ENCODE measurements at regions of chr14 and their contacts with region 1.

Region 1: DNA sequence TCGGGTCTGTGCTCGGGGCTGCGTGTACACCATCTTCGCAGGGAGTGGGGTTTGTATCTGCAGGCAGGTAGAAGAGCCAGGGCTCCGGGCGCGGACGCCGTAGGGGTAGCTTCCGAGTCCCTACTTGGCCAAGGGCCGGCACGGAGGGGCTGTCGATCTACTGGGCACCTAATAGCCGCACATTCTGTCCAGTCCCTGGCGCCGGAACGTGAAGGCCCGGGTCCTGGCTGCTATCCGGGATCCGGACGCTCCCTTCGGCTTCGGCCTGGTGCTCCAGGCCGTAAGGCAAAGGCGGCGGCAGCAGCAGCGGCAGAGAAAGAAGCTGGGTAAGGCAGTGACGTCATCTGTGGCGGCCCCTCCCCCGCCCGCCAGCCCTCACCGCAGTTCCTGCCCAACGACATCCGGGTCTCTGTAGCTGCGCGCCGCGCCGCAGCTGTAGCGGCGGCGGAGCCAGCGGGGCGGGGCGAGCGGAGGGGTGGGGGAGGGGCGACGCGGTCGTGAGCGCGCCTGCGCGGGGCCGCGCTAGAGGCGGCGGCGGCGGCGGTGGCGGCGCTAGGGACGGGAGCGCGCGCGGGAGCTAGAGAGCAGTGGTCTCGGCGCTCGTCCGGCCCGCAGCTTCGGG is at the start of gene PPM1A:
- DNase-seq: peak; percentile 93 to 97 (median 94)
- H3K4me3 ChIP-seq: peak within 1 kb of the TSS; percentile 78
- H3K4me3 Mint-ChIP-seq: peak within 1 kb of the TSS; percentile 90 to 99 (median 95)
- H3K27ac ChIP-seq: peak within 1 kb of the TSS; percentile 94
- H3K27ac Mint-ChIP-seq: peak within 1 kb of the TSS; percentile 97 to 100 (median 100)
- H3K4me1 ChIP-seq: peaks cover 24% of the 10 kb centered on the region
- H3K4me1 Mint-ChIP-seq: peaks cover 50 to 52% (median 52%) of the 10 kb centered on the region in 3 donors
- H3K27me3 ChIP-seq: no peaks in the 10 kb centered on the region
- H3K27me3 Mint-ChIP-seq: peaks cover 0 to 4% of the 10 kb centered on the region in 2 donors
- total RNA-seq, gene PPM1A: 54.6 to 55.3 TPM

Region 2: DNA sequence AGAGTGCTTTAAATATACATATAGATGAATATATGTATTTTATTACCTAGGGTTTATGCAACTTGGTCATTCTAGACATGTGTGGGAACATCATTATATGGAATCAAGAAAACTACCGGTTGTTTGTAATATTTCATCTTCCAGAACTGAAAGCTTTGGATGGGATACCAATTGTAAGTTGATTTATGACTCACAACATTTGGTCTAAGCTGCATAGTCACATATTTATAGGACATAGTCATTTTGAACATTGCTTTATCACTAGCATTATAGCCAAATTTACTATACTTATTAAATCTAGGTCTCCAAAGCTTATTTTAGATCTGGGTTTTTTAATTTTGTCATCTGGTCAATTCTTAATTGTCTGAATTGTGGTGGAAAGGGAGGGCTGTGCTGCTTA is 240.8 kb before region 1 on chr14:
- CTCF ChIA-PET with region 1: no interaction called
- POLR2A ChIA-PET with region 1: no interaction called
- DNase-seq: no peak
- H3K4me3 ChIP-seq: no peak overlapping the region
- H3K4me3 Mint-ChIP-seq: no peak overlapping the region
- H3K27ac ChIP-seq: no peak overlapping the region
- H3K27ac Mint-ChIP-seq: no peak overlapping the region
- H3K4me1 ChIP-seq: no peaks in the 10 kb centered on the region
- H3K4me1 Mint-ChIP-seq: no peaks in the 10 kb centered on the region
- H3K27me3 ChIP-seq: no peaks in the 10 kb centered on the region
- H3K27me3 Mint-ChIP-seq: peaks cover 12 to 28% of the 10 kb centered on the region in 2 donors

Region 3: DNA sequence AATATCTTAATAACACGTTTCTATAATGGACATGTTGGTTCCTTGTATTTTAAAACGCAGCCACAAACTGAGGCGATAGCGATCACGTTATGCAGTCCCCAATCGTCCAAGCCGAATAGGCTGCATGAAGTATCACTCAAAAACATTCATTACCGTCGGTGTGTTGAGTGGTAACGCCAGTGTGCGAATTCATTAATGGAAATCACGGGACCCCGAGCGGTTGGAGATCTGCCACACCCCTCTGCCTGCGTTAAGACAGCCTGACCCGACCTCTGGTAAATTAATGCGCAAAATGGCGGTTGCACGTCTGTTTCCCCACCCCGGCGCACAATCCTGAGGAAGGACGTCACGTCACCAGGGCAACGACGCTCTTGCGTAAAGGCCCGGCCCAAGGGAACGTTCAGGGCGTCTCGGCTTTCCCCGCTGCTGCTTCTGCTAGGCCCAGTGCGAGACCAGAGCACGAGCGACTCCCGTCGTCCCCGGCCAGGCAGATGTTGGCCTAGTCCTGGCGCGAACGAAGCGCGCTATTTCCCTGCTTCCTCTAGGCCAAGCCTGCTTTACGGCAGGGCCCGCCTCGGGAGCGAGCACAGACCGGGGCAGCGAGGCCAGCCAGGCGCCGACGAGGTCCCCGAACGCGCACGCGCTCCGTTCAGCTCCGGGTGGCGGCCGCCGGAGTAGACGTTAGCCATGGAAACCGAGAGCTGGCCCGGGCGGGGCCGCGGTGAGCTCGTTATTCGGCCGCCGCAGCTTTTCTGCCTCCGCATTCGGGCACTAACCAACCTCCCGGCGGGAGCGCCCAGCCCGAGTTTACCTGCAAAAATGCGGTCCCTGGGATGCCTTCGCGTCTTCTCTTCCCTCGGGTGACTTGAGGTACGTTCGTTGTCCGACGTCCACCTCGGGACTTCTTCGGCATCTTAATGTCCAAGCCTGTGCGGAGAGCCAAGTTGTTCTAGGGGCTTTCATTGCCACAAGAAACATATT is 157.0 kb before region 1 on chr14 and contains the start of gene PCNX4:
- CTCF ChIA-PET with region 1: no interaction called
- POLR2A ChIA-PET with region 1: interaction called, 11 read pairs
- DNase-seq: peak; percentile 90 to 97 (median 95)
- H3K4me3 ChIP-seq: peak within 1 kb of the TSS; percentile 90
- H3K4me3 Mint-ChIP-seq: peak within 1 kb of the TSS; percentile 86 to 96 (median 93)
- H3K27ac ChIP-seq: peak within 1 kb of the TSS; percentile 90
- H3K27ac Mint-ChIP-seq: peak within 1 kb of the TSS; percentile 85 to 99 (median 95)
- H3K4me1 ChIP-seq: peaks cover 28% of the 10 kb centered on the region
- H3K4me1 Mint-ChIP-seq: peaks cover 39 to 54% (median 48%) of the 10 kb centered on the region in 3 donors
- H3K27me3 ChIP-seq: no peaks in the 10 kb centered on the region
- H3K27me3 Mint-ChIP-seq: peaks cover 0 to 3% of the 10 kb centered on the region in 2 donors
- total RNA-seq, gene PCNX4: 38.8 to 43.5 TPM

Region 4: GRCh38 chr14:60273956-60274355 is 25.1 kb after region 1 on chr14:
- CTCF ChIA-PET with region 1: no interaction called
- POLR2A ChIA-PET with region 1: no interaction called
- DNase-seq: no peak
- H3K4me3 ChIP-seq: no peak overlapping the region
- H3K4me3 Mint-ChIP-seq: peak overlapping the region in 1 of 7 donors; percentile 7
- H3K27ac ChIP-seq: no peak overlapping the region
- H3K27ac Mint-ChIP-seq: no peak overlapping the region
- H3K4me1 ChIP-seq: peaks cover 32% of the 10 kb centered on the region
- H3K4me1 Mint-ChIP-seq: peaks cover 69 to 83% (median 82%) of the 10 kb centered on the region in 3 donors
- H3K27me3 ChIP-seq: no peaks in the 10 kb centered on the region
- H3K27me3 Mint-ChIP-seq: peaks cover 0 to 2% of the 10 kb centered on the region in 2 donors

Measured in CD8-positive, alpha-beta memory T cell (primary cell).